ENCODE measurements at regions of chr15 and their contacts with region 1.

Region 1: GRCh38 chr15:80058851-80059785 is at the start of gene ZFAND6:
- DNase-seq: peak; percentile 94 to 96
- ATAC-seq: peak; percentile 92 to 96
- H3K4me3 ChIP-seq: peak within 1 kb of the TSS; percentile 80
- H3K27ac ChIP-seq: peak within 1 kb of the TSS; percentile 90 to 97
- H3K4me1 ChIP-seq: peaks cover 29% of the 10 kb centered on the region
- CTCF ChIP-seq: no peak; the same call in 2 of the 3 replicates
- EP300 ChIP-seq: no peak
- POLR2A ChIP-seq: peak; percentile 91
- RAD21 ChIP-seq: peak; percentile 26 to 41; a peak in 1 of 5 replicates
- polyA plus RNA-seq, gene ZFAND6: 271 and 307 TPM in 2 replicates

Region 2: DNA sequence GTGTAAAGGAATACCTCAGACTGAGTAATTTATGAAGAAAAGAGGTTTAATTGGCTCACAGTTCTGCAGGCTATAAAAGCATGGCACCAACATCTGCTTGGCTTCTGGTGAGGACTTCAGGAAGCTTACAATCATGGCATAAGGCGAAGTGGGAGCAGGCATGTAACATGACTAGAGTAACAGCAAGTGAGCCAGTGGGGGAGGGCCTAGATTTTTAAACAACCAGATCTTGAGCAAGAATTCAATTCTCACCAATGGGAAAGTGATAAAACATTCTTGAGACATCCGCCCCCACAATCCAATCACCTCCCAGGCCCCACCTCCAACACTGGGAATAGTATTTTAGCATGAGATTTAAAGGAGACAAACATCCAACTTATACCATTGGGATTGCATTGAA is 44.0 kb before region 1 on chr15:
- CTCF ChIA-PET with region 1: no interaction called
- POLR2A ChIA-PET with region 1: no interaction called
- DNase-seq: no peak
- ATAC-seq: no peak
- H3K4me3 ChIP-seq: no peak overlapping the region
- H3K27ac ChIP-seq: no peak overlapping the region
- H3K4me1 ChIP-seq: peaks cover 22% of the 10 kb centered on the region
- CTCF ChIP-seq: no peak
- EP300 ChIP-seq: no peak
- POLR2A ChIP-seq: no peak
- RAD21 ChIP-seq: no peak

Region 3: DNA sequence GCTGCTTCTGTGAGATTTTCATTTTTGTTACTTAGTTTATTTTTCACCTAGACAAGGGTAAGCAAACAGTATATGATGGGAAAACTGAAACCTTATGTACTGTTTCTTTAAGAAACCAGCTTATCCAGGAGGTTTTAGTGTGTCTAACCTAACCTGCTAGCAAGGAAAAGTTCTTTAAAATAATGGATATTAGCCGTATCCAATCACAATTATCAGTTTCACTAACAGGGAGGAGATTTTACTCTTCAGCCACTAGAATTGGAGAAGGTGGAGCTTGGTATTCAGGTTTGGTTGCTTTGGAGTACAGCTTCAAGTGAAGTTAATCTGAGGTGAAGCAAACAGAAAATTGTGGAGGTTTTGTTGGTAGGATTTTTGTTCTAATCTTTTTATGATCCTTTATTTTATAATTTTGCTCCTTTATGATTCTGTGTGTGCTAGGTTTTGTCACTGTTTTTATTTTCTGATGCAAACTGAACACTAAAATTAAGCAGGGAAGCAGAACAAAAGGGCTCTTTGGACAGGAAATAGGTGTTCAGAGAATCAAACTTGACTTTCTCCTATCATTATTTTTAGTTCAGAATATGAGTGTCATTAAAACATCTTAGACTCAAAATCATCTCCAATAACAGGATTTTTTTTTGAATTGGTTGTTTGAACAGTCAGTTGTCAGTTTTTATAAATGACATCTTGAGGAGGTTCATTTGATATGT is 13.3 kb after region 1 on chr15:
- CTCF ChIA-PET with region 1: interaction called, 18 read pairs
- POLR2A ChIA-PET with region 1: interaction called, 33 read pairs
- DNase-seq: peak; percentile 71 to 93
- ATAC-seq: peak; percentile 97 to 100
- H3K4me3 ChIP-seq: peak overlapping the region; percentile 37
- H3K27ac ChIP-seq: peak overlapping the region in 1 of 2 experiments; percentile 11; a peak in 1 of 6 replicates
- H3K4me1 ChIP-seq: peaks cover 55% of the 10 kb centered on the region
- CTCF ChIP-seq: no peak
- EP300 ChIP-seq: no peak
- POLR2A ChIP-seq: no peak
- RAD21 ChIP-seq: no peak

Measured in A549 (cell line).